ENCODE measurements at regions of chr5 and their contacts with region 1.

Region 1: GRCh38 chr5:141369994-141370848 is at the start of gene PCDHGB3:
- DNase-seq: no peak
- H3K4me3 ChIP-seq: peak within 1 kb of the TSS; percentile 47
- H3K27ac ChIP-seq: no peak within 1 kb of the TSS
- H3K27me3 ChIP-seq: peaks cover 16% of the 10 kb centered on the region
- CTCF ChIP-seq: peak; percentile 48
- polyA plus RNA-seq, gene PCDHGB3: 3.6 and 4.3 TPM in 2 replicates

Region 2: GRCh38 chr5:141250576-141250975 is 119.6 kb before region 1 on chr5:
- CTCF ChIA-PET with region 1: no interaction called
- POLR2A ChIA-PET with region 1: no interaction called
- DNase-seq: no peak
- H3K4me3 ChIP-seq: no peak overlapping the region
- H3K27ac ChIP-seq: no peak overlapping the region
- H3K27me3 ChIP-seq: no peaks in the 10 kb centered on the region
- CTCF ChIP-seq: no peak

Region 3: DNA sequence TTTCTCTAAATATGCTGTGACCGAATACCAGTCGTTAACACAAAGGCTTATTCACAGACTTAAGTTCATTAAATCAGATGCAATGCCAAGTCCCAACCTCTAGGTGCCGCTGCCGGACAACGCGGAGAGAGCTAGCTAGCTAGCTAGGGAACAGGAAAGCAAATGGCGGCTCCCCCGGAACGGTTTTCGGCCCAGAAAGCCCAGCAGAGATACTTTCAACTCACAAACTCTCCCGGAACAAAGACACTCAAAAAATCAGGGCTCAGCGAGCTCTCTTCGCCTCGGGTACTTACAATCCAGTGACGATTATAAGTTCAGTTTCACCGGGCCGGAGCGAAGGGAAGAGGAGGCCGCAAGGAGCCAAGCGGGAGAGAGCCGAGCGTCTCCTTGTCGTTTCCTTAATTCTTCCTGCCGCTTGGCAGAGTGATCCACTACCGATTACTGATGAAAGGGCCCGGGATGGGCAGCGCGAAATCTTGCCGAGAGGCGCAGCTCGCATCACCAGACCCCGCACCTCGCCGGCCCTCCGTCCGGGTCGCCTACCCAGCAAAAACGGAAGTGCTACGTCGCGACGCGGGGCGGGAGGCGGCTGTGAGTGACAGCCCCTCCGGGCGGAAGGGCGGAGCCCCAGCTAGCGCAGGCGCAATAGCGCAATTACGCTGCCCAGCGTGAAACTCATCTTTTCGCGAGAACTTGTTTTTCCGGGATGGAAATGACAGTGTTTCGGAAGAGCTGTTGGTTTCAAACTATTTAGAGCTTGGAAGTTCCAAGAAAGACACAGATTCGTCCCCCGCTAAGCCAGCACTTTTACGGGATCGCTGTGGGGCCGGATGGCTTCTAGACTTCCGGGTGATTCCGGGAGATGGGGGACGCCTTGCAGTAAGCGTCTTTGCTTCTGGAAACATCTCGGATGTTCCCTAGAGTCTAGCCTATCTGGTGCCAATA is 49.7 kb before region 1 on chr5 and contains the start of gene TAF7:
- CTCF ChIA-PET with region 1: interaction called, 18 read pairs
- POLR2A ChIA-PET with region 1: no interaction called
- DNase-seq: peak; percentile 84
- H3K4me3 ChIP-seq: peak within 1 kb of the TSS; percentile 84
- H3K27ac ChIP-seq: peak within 1 kb of the TSS; percentile 99
- H3K27me3 ChIP-seq: no peaks in the 10 kb centered on the region
- CTCF ChIP-seq: peak; percentile 88
- polyA plus RNA-seq, gene TAF7: 60.3 and 71.0 TPM in 2 replicates

Region 4: GRCh38 chr5:141349917-141350619 is 20.2 kb before region 1 on chr5 and contains the start of gene PCDHGB1:
- CTCF ChIA-PET with region 1: interaction called, 11 read pairs
- POLR2A ChIA-PET with region 1: no interaction called
- DNase-seq: no peak
- H3K4me3 ChIP-seq: peak within 1 kb of the TSS; percentile 46
- H3K27ac ChIP-seq: no peak within 1 kb of the TSS
- H3K27me3 ChIP-seq: peaks cover 2% of the 10 kb centered on the region
- CTCF ChIP-seq: peak; percentile 54
- polyA plus RNA-seq, gene PCDHGB1: 3.2 TPM in 2 replicates

Region 5: GRCh38 chr5:141387233-141387949 is 17.2 kb after region 1 on chr5 and contains the start of gene PCDHGB4:
- CTCF ChIA-PET with region 1: interaction called, 19 read pairs
- POLR2A ChIA-PET with region 1: no interaction called
- DNase-seq: no peak
- H3K4me3 ChIP-seq: peak within 1 kb of the TSS; percentile 31; the same call in 1 of the 2 replicates
- H3K27ac ChIP-seq: no peak within 1 kb of the TSS
- H3K27me3 ChIP-seq: peaks cover 6% of the 10 kb centered on the region
- CTCF ChIP-seq: peak; percentile 43
- polyA plus RNA-seq, gene PCDHGB4: 10.3 and 10.9 TPM in 2 replicates

Measured in AG04450 (cell line).